Body of pancreas (tissue), 4 donors: ENCODE measurements at regions of chr12 and their contacts with region 1.

Region 1: DNA sequence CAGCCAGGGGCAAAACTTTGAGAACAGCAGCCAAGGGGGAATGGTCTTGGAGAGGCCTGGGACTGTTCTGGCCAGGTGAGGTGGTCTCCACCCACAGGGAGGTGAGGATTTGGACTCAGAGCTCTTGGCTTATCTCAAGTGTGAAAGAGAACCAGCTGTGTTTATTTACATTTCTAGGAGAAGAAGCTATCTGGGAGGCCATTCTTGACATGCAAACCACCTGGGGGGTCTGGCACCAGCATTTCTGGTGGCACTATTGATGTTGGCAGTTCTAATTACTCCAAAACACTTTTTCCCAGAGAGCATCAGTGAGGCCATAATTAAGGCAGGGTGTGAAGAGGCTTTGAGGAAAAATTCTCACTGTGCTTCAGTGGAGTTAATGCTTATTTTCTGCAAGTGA is 95.1 kb downstream of the CAND1 start:
- DNase-seq: no peak
- ATAC-seq: no peak
- H3K4me3 ChIP-seq: no peak overlapping the region
- H3K27ac ChIP-seq: no peak overlapping the region
- H3K4me1 ChIP-seq: no peaks in the 10 kb centered on the region
- H3K27me3 ChIP-seq: no peaks in the 10 kb centered on the region
- CTCF ChIP-seq: no peak
- POLR2A ChIP-seq: no peak

Region 2: DNA sequence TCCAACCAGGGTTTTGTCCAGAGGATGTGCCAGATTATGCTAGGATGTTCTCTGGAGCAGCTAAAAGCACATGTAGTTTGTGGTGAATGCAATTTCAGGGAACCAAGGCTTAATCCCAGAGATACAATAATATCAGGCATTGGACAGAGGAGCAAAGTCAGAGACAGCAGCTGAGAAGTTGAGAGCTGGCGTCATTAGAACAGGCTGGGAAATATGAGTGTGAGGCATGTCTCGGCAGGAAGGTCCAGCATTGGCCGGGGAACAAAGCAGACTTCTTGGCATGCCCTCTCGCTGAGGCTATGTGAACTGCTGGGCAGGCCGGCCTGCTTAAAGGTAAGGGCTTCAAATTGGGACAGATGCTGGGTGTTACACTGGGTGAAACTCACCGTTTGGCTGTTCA is 30.3 kb after region 1 on chr12:
- intact Hi-C with region 1: no loop called
- DNase-seq: peak; percentile 53 to 78 (median 68)
- ATAC-seq: peak; percentile 70
- H3K4me3 ChIP-seq: no peak overlapping the region
- H3K27ac ChIP-seq: no peak overlapping the region
- H3K4me1 ChIP-seq: no peaks in the 10 kb centered on the region
- H3K27me3 ChIP-seq: no peaks in the 10 kb centered on the region
- CTCF ChIP-seq: peak; percentile 6 to 56 (median 35)
- POLR2A ChIP-seq: no peak

Region 3: DNA sequence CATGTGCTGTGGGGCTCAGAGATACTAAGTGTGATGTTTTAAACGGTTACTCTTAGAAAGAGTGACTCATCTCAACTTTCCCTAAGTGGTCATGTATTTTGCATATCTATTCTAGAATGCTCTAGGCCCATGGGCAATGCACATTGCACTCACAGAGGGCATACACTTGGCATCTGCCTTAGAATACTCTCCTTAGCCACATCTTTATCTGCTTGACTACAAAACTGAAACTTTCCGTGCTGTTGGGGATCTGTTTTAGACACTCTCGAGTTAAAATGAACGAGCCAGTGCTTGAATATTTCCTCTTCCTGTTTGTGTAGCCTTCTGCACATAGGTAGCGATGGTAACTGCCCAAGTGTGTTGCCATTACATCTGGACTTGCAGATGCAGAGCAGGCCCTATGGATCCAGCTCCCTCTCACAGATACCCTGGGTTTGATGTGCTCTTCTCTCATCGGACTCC is 85.4 kb after region 1 on chr12:
- intact Hi-C with region 1: loop called (anchors 5 kb)
- DNase-seq: no peak
- ATAC-seq: no peak
- H3K4me3 ChIP-seq: no peak overlapping the region
- H3K27ac ChIP-seq: no peak overlapping the region
- H3K4me1 ChIP-seq: no peaks in the 10 kb centered on the region
- H3K27me3 ChIP-seq: no peaks in the 10 kb centered on the region
- CTCF ChIP-seq: no peak
- POLR2A ChIP-seq: no peak

Region 4: DNA sequence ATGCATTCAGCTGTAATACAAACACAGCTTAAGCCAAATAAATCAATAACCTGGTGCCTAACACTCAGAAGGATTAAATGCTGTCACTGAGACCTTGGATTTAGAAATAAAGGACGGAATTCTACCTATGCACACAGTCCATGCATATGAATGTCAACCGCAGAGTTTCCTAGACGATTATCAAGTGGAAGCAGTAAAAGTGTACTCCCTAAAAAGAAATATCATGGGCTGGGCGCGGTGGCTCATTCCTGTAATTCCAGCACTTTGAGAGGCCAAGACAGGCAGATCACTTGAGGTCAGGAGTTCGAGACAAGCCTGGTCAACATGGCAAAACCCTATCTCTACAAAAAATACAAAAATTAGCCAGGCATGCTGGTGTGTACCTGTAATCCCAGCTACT is 96.2 kb after region 1 on chr12:
- intact Hi-C with region 1: no loop called
- DNase-seq: no peak
- ATAC-seq: no peak
- H3K4me3 ChIP-seq: no peak overlapping the region
- H3K27ac ChIP-seq: no peak overlapping the region
- H3K4me1 ChIP-seq: peaks cover 10% of the 10 kb centered on the region
- H3K27me3 ChIP-seq: no peaks in the 10 kb centered on the region
- CTCF ChIP-seq: no peak
- POLR2A ChIP-seq: no peak